GM13977 (cell line): ENCODE measurements at regions of chr19 and their contacts with region 1.

Region 1: GRCh38 chr19:42113641-42114348 is 18.5 kb downstream of the POU2F2 start:
- DNase-seq: peak; percentile 76
- CTCF ChIP-seq: peak; percentile 28

Region 2: DNA sequence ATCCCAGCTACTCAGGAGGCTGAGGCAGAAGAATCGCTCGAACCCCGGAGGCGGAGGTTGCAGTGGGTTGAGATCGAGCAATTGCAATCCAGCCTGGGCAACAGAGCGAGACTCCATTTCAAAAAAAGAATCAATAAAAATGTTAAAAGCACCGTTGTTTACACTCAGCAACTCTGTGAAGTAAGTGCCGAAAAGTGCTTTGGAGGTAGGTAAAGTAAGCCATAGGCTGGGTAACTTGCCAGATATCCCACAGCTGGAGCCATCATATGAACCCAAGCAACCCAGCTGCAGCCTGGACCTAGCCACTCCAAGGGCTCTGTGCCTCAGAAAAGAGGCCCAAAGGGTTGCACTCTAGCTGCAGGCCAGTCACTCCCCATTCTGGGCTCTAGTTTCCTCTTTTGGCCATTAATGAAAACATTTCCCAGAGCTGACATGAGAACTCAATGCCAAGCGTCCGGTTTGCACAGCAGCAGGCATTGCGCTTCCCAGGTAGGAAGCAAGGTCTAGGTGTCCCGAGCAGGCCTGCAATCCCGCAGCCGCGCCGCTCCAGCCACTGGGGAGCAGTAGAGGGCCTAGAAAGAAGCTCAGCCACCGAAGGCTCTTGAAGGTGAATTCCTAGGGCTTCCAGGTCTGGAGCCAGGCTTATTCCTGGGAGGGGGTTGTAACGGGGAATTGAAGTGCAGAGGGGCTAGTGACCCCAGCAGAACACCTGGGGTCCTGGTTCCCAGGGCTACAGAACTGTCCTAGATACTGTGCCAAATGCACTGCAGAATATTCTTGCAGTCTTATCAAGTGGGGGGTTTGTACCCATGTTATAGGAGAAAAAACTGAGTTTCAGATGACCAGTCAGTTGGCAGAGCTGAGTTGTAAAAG is 240.8 kb before region 1 on chr19:
- in situ Hi-C with region 1: no loop called
- DNase-seq: no peak
- CTCF ChIP-seq: peak; percentile 96

Region 3: DNA sequence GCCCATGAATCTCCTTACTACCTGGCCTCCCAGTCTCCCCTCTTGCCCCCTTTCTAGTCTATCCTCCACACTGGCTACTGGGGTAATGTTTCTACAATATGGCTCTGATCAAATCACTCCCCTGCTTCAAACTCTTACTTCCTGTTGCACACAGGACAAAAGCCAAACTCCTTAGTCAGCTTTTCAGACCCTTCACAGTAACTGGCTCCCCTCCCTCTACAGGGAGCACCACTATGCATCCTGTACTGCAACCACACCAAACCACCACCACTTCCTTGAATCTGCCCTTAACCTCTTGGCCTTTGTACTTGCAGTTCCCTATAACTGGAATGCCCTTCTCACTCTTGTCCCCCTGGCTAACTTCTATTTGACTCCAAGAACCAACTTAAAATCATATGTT is 71.5 kb after region 1 on chr19:
- in situ Hi-C with region 1: loop called (anchors 5 kb)
- DNase-seq: no peak
- CTCF ChIP-seq: no peak

Region 4: GRCh38 chr19:42207767-42208271 is 94.0 kb after region 1 on chr19:
- in situ Hi-C with region 1: no loop called
- DNase-seq: no peak
- CTCF ChIP-seq: no peak